PC-9 (cell line): ENCODE measurements at regions of chr9 and their contacts with region 1.

Region 1: GRCh38 chr9:2704504-2704903 is 12.8 kb upstream of the KCNV2 start:
- DNase-seq: no peak
- H3K4me3 ChIP-seq: no peak overlapping the region
- H3K27ac ChIP-seq: no peak overlapping the region
- H3K4me1 ChIP-seq: no peaks in the 10 kb centered on the region
- H3K27me3 ChIP-seq: no peaks in the 10 kb centered on the region
- CTCF ChIP-seq: no peak

Region 2: GRCh38 chr9:2359821-2360505 is 344.5 kb before region 1 on chr9:
- CTCF ChIA-PET with region 1: no interaction called
- POLR2A ChIA-PET with region 1: no interaction called
- intact Hi-C with region 1: loop called (anchors 5 kb)
- DNase-seq: no peak
- H3K4me3 ChIP-seq: no peak overlapping the region
- H3K27ac ChIP-seq: no peak overlapping the region
- H3K4me1 ChIP-seq: no peaks in the 10 kb centered on the region
- H3K27me3 ChIP-seq: no peaks in the 10 kb centered on the region
- CTCF ChIP-seq: no peak